Panc1 (cell line): ENCODE measurements at regions of chr7 and their contacts with region 1.

Region 1: DNA sequence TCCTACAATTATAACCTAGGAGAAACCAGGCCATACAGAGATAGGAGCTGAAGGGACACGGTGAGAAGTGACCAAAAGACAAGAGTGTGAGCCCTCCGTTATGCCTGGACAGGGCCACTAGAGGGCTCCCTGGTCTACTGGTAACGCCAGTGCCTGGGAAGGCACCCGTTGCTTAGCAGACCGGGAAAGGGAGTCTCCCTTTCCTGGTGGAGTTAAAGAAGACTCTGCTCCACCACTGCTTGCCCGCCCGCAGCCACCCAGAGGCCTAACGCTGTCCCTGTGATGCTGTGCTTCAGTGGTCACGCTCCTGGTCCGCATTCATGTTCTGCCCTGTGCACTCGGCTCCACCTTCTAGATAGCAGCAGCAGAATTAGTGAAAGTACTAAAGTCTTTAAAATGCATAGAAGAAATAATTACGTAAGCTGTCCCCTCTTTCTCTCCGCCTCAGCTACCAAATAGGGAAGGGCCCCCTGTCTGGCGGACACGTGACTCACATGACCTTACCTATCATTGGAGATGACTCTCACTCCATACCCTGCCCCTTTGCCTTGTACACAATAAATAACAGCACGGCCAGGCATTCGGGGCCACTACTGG is 34.8 kb downstream of the GRID2IP start:
- DNase-seq: peak; percentile 75
- ATAC-seq: peak; percentile 96
- H3K4me3 ChIP-seq: peak overlapping the region; percentile 12 to 51
- H3K27ac ChIP-seq: no peak overlapping the region
- H3K4me1 ChIP-seq: no peaks in the 10 kb centered on the region
- H3K27me3 ChIP-seq: no peaks in the 10 kb centered on the region
- CTCF ChIP-seq: peak; percentile 98

Region 2: DNA sequence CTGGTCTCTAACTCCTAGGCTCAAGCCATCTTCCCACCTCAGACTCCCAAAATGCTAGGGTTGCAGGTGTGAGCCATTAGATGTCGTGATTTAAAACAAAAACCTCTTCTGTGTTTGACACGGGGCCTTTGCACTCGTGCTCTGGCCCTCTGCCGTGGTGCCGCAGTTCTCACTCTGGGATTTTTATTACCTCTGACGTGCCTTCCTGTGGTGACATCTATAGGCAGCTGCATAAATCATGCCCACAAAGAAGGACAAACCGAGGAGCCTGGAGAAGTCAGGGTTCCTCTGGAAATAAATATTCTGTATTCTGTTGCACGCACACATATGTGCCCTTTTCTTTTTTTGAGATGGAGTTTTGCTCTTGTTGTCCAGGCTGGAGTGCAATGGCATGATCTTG is 661.7 kb before region 1 on chr7:
- CTCF ChIA-PET with region 1: no interaction called
- POLR2A ChIA-PET with region 1: interaction called, 3 read pairs
- in situ Hi-C with region 1: no loop called
- intact Hi-C with region 1: loop called (anchors 5 kb)
- DNase-seq: no peak
- ATAC-seq: no peak
- H3K4me3 ChIP-seq: no peak overlapping the region
- H3K27ac ChIP-seq: no peak overlapping the region
- H3K4me1 ChIP-seq: no peaks in the 10 kb centered on the region
- H3K27me3 ChIP-seq: no peaks in the 10 kb centered on the region
- CTCF ChIP-seq: no peak

Region 3: DNA sequence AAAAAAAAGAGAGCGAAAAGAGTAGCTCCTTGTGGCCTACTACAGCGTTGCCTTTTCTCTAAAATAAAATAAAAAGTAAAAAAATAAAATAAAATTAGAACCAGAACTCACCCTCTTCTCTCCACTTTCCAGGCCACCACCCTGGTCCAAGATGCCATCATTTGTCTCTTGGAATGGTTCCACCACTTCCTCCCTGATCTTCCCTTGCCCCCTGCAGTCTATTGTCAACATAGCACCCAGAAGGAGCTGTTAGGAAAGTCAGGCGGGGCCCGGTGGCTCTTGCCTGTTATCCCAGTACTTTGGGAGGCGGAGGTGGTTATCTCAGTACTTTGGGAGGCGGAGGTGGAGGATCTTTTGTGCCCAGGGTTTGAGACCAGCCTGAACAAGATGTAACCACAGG is 42.4 kb after region 1 on chr7:
- CTCF ChIA-PET with region 1: interaction called, 29 read pairs
- POLR2A ChIA-PET with region 1: no interaction called
- in situ Hi-C with region 1: no loop called
- intact Hi-C with region 1: no loop called
- DNase-seq: no peak
- ATAC-seq: peak; percentile 80
- H3K4me3 ChIP-seq: no peak overlapping the region
- H3K27ac ChIP-seq: no peak overlapping the region
- H3K4me1 ChIP-seq: no peaks in the 10 kb centered on the region
- H3K27me3 ChIP-seq: no peaks in the 10 kb centered on the region
- CTCF ChIP-seq: no peak; the same call in 1 of the 2 replicates

Region 4: DNA sequence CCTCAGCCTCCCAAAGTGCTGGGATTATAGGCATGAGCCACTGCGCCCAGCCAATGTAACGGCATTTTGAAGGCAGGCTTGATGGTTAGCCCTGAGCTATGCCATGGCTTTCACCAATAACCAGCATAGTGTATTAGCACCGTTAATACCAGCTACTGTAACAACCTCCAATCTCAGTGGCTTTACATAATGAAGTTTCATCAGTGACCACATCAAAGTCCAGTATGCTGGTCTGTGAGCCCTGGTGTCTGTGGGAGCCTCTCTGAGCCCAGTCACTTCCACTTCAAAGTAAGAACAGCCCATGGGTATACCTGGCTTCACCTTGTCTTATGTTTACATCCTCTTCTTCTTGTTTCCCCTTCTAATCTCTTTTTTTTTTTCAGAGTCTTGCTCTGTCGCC is 49.2 kb after region 1 on chr7:
- CTCF ChIA-PET with region 1: no interaction called
- POLR2A ChIA-PET with region 1: no interaction called
- in situ Hi-C with region 1: no loop called
- intact Hi-C with region 1: loop called (anchors 1 kb)
- DNase-seq: no peak
- ATAC-seq: no peak
- H3K4me3 ChIP-seq: no peak overlapping the region
- H3K27ac ChIP-seq: no peak overlapping the region
- H3K4me1 ChIP-seq: no peaks in the 10 kb centered on the region
- H3K27me3 ChIP-seq: no peaks in the 10 kb centered on the region
- CTCF ChIP-seq: no peak

Region 5: GRCh38 chr7:6577365-6578113 is 61.1 kb after region 1 on chr7 and contains the start of gene ZDHHC4:
- CTCF ChIA-PET with region 1: interaction called, 17 read pairs
- POLR2A ChIA-PET with region 1: no interaction called
- in situ Hi-C with region 1: no loop called
- intact Hi-C with region 1: no loop called
- DNase-seq: no peak
- ATAC-seq: peak; percentile 99
- H3K4me3 ChIP-seq: peak within 1 kb of the TSS; percentile 79 to 94
- H3K27ac ChIP-seq: peak within 1 kb of the TSS; percentile 93
- H3K4me1 ChIP-seq: peaks cover 17% of the 10 kb centered on the region
- H3K27me3 ChIP-seq: no peaks in the 10 kb centered on the region
- CTCF ChIP-seq: no peak
- total RNA-seq, gene ZDHHC4: 113 TPM